Activated B cell treated with CpG ODN at 0.5 μM for 24 hours (primary cell): ENCODE measurements at regions of chr11 and their contacts with region 1.

Region 1: DNA sequence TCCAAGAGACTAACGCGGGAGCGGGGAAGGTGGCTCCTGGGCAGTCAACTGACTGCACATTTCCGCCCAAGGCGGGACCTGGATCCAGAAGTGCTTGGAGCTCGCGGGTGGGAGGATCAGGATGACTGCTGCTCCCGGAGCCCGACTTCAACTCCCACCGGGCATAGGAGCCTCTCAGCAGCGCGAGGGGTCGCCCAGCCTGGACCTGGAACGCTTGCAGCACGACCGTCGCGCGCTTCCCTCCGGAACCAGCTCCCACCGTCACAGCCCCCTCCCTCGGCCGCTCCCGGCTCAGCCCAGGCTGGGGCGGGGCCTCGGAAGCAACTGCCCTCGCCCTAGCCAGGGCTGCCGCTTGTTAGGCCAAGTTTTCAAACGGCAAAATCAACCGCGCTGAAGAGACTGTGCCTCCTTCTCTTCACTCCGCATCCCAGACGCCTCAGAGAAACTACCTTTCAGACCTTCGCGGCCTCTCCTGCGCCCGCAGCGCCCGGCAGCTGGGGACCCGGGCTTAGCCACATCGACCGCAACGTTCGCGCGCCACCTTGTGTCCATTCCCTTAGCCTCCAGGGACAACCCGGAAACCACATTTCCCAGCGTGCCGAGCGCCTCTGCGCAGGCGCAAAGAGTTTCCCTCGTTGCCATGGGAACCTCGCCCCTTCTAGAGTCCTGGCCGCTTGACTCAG is 14.0 kb downstream of the SSH3 start:
- DNase-seq: peak; percentile 96
- ATAC-seq: peak; percentile 82
- H3K4me3 Mint-ChIP-seq: peak overlapping the region; percentile 98
- H3K27ac Mint-ChIP-seq: peak overlapping the region; percentile 98
- H3K4me1 Mint-ChIP-seq: peaks cover 23% of the 10 kb centered on the region
- H3K27me3 Mint-ChIP-seq: no peaks in the 10 kb centered on the region
- CTCF ChIP-seq: no peak

Region 2: DNA sequence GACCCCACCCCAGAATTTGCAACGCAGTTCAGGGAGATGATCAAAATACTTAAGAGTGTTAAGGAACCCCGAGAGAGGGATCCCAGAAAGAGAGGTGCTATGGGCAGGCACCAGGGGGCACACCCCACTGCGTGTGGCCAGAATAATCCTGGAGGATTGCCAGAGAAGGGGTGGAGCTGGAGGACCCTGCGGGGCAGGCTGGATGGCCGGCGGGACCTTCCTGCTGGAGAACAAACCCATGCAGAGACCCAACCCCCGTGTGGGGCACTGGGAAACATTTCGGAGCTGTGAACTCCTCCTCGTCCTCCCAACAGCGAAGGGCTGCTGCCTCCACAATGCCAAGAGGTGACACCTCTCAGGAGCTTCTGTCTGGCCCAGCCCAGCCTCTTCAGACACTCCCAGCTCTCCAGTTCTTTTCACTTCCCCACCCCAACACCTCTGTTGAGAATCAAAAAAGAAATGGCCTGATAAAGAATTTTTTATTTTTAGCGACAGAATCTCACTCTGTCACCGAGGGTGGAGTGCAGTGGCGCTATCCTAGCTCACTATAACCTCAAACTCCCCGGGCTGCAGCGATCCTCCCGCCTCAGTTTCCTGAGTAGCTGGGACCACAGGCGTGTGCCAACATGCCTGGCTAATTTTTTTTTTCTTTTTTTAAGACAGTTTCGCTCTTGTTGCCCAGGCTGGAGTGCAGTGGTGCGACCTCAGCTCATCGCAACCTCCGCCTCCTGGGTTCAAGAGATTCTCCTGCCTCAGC is 235.1 kb before region 1 on chr11:
- CTCF ChIA-PET with region 1: interaction called, 7 read pairs
- POLR2A ChIA-PET with region 1: no interaction called
- intact Hi-C with region 1: loop called (anchors 1 kb)
- DNase-seq: no peak
- ATAC-seq: no peak
- H3K4me3 Mint-ChIP-seq: peak overlapping the region; percentile 41
- H3K27ac Mint-ChIP-seq: no peak overlapping the region
- H3K4me1 Mint-ChIP-seq: peaks cover 14% of the 10 kb centered on the region
- H3K27me3 Mint-ChIP-seq: peaks cover 10% of the 10 kb centered on the region
- CTCF ChIP-seq: no peak

Region 3: GRCh38 chr11:67277231-67277961 is 40.0 kb before region 1 on chr11:
- CTCF ChIA-PET with region 1: interaction called, 10 read pairs
- POLR2A ChIA-PET with region 1: interaction called, 34 read pairs
- intact Hi-C with region 1: loop called (anchors 1 kb)
- DNase-seq: peak; percentile 85
- ATAC-seq: peak; percentile 93
- H3K4me3 Mint-ChIP-seq: peak overlapping the region; percentile 59
- H3K27ac Mint-ChIP-seq: peak overlapping the region; percentile 98
- H3K4me1 Mint-ChIP-seq: peaks cover 85% of the 10 kb centered on the region
- H3K27me3 Mint-ChIP-seq: no peaks in the 10 kb centered on the region
- CTCF ChIP-seq: no peak

Region 4: GRCh38 chr11:67345920-67346799 is 28.8 kb after region 1 on chr11:
- CTCF ChIA-PET with region 1: interaction called, 13 read pairs
- POLR2A ChIA-PET with region 1: interaction called, 64 read pairs
- intact Hi-C with region 1: no loop called
- DNase-seq: no peak
- ATAC-seq: peak; percentile 46
- H3K4me3 Mint-ChIP-seq: no peak overlapping the region
- H3K27ac Mint-ChIP-seq: peak overlapping the region; percentile 88
- H3K4me1 Mint-ChIP-seq: peaks cover 71% of the 10 kb centered on the region
- H3K27me3 Mint-ChIP-seq: no peaks in the 10 kb centered on the region
- CTCF ChIP-seq: no peak

Region 5: DNA sequence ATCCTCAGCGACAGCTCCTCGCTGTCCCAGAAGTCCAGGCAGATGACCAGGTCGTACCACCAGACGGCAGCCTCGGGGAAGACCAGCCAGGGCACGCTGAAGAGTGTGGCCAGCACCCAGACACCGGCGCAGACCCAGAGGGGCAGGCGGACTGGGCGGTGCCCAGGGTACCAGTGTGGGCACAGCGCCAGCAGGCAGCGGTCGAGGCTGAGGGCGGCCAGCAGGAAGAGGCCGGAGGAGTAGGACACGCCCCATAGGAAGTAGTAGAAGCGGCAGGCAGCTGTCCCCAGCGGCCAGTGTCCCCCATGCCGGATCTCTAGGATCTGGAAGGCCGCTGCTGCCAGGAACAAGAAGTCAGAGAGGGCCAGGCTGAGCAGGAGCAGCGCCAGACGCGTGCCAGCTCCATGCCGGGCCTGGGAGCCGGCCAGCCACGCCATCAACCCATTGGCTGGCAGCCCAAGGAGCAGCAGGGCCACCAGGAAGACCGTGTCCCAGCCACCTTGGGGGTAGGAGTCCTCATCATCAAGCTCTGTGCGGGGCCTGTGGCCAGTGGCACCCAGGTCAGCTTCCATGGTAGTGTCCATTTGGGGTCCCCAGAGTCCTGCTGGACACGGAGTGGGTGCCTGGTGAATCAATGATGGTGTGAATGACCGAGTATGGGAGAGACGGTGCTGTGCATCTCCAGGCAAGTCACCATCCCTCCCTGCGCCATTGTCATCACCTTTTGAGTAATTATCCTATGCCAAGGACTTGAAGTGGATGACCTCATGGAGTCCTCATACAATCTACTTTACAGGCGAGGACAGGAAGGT is 135.0 kb after region 1 on chr11 and contains the start of gene GPR152:
- CTCF ChIA-PET with region 1: no interaction called
- POLR2A ChIA-PET with region 1: no interaction called
- intact Hi-C with region 1: no loop called
- DNase-seq: no peak
- ATAC-seq: no peak
- H3K4me3 Mint-ChIP-seq: no peak within 1 kb of the TSS
- H3K27ac Mint-ChIP-seq: peak within 1 kb of the TSS; percentile 18
- H3K4me1 Mint-ChIP-seq: peaks cover 48% of the 10 kb centered on the region
- H3K27me3 Mint-ChIP-seq: no peaks in the 10 kb centered on the region
- CTCF ChIP-seq: no peak
- total RNA-seq, gene GPR152: not detected in 2 replicates